Activated B cell treated with CpG ODN at 0.5 μM for 24 hours (primary cell): ENCODE measurements at regions of chr6 and their contacts with region 1.

Region 1: DNA sequence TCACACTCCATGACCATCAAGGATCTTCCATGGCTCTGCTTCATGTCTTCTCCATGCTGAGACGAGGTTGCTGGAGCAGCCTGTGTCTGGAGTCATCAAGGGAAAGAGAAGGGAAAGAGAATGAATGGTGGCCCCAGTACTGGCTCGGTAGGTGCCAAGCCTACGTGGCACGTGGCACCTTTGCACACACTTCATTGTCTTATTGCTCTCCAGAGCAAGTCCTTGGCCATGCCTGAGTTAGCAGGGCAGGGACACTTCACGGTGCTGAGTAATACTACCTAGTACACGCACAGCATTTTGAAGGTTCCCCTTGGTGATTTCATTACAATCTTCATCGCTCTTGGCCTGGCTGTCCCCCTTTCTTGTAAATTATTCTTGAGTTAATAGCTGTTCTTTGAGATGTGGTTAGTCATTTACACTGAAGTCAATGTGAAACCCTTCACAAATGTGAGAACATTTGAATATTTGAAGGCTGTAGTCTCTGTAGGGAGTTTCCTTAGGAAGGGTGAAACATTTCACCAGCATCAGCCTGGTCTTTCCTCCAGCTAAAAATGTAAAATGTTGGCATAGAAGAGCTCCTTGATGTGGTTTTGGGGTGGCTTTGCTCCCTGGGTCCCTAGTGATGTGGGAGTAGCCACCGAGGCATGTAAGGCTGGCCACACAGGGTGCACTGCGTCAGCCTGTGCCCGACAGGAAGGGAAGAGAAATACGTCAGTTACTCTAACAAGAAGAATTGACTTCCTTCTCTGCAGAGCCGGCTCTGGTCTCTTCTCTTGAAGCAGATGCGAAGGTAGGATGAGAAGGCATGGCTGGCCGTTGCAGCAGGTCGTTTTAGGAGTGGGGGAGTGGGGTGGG is at the start of gene SYTL3:
- DNase-seq: peak; percentile 57
- ATAC-seq: peak; percentile 72
- H3K4me3 Mint-ChIP-seq: peak within 1 kb of the TSS; percentile 86
- H3K27ac Mint-ChIP-seq: peak within 1 kb of the TSS; percentile 100
- H3K4me1 Mint-ChIP-seq: peaks cover 49% of the 10 kb centered on the region
- H3K27me3 Mint-ChIP-seq: peaks cover 2% of the 10 kb centered on the region
- CTCF ChIP-seq: no peak
- total RNA-seq, gene SYTL3: 5.8 and 6.0 TPM in 2 replicates

Region 2: GRCh38 chr6:158660333-158660754 is 10.8 kb after region 1 on chr6:
- CTCF ChIA-PET with region 1: interaction called, 14 read pairs
- POLR2A ChIA-PET with region 1: interaction called, 4 read pairs
- intact Hi-C with region 1: loop called (anchors 1 kb)
- DNase-seq: no peak
- ATAC-seq: peak; percentile 90
- H3K4me3 Mint-ChIP-seq: no peak overlapping the region
- H3K27ac Mint-ChIP-seq: no peak overlapping the region
- H3K4me1 Mint-ChIP-seq: peaks cover 9% of the 10 kb centered on the region
- H3K27me3 Mint-ChIP-seq: peaks cover 14% of the 10 kb centered on the region
- CTCF ChIP-seq: no peak

Region 3: GRCh38 chr6:158666628-158667359 is 17.3 kb after region 1 on chr6:
- CTCF ChIA-PET with region 1: no interaction called
- POLR2A ChIA-PET with region 1: interaction called, 7 read pairs
- intact Hi-C with region 1: loop called (anchors 2 kb)
- DNase-seq: no peak
- ATAC-seq: peak; percentile 57
- H3K4me3 Mint-ChIP-seq: peak overlapping the region; percentile 16
- H3K27ac Mint-ChIP-seq: peak overlapping the region; percentile 70
- H3K4me1 Mint-ChIP-seq: peaks cover 17% of the 10 kb centered on the region
- H3K27me3 Mint-ChIP-seq: peaks cover 9% of the 10 kb centered on the region
- CTCF ChIP-seq: no peak